ENCODE measurements at regions of chr3 and their contacts with region 1.

Region 1: GRCh38 chr3:42129014-42129953 is 38.1 kb downstream of the TRAK1 start:
- DNase-seq: peak; percentile 53 to 63
- H3K4me3 ChIP-seq: no peak overlapping the region
- H3K4me3 Mint-ChIP-seq: peak overlapping the region; percentile 48
- H3K27ac Mint-ChIP-seq: peak overlapping the region; percentile 91
- H3K4me1 ChIP-seq: peaks cover 46% of the 10 kb centered on the region
- H3K4me1 Mint-ChIP-seq: peaks cover 33% of the 10 kb centered on the region
- H3K27me3 ChIP-seq: no peaks in the 10 kb centered on the region
- H3K27me3 Mint-ChIP-seq: no peaks in the 10 kb centered on the region
- CTCF ChIP-seq: no peak

Region 2: GRCh38 chr3:42149532-42150426 is 20.5 kb after region 1 on chr3:
- CTCF ChIA-PET with region 1: interaction called, 4 read pairs
- POLR2A ChIA-PET with region 1: interaction called, 4 read pairs
- intact Hi-C with region 1: loop called (anchors 1 kb)
- DNase-seq: peak; percentile 88 to 97
- H3K4me3 ChIP-seq: no peak overlapping the region
- H3K4me3 Mint-ChIP-seq: peak overlapping the region; percentile 51
- H3K27ac Mint-ChIP-seq: peak overlapping the region; percentile 89
- H3K4me1 ChIP-seq: peaks cover 46% of the 10 kb centered on the region
- H3K4me1 Mint-ChIP-seq: peaks cover 18% of the 10 kb centered on the region
- H3K27me3 ChIP-seq: no peaks in the 10 kb centered on the region
- H3K27me3 Mint-ChIP-seq: no peaks in the 10 kb centered on the region
- CTCF ChIP-seq: no peak

Region 3: GRCh38 chr3:42159706-42160472 is 30.6 kb after region 1 on chr3:
- CTCF ChIA-PET with region 1: interaction called, 10 read pairs
- POLR2A ChIA-PET with region 1: interaction called, 8 read pairs
- intact Hi-C with region 1: loop called (anchors 2 kb)
- DNase-seq: peak; percentile 87 to 94
- H3K4me3 ChIP-seq: peak overlapping the region; percentile 42
- H3K4me3 Mint-ChIP-seq: peak overlapping the region; percentile 80
- H3K27ac Mint-ChIP-seq: peak overlapping the region; percentile 75
- H3K4me1 ChIP-seq: peaks cover 24% of the 10 kb centered on the region
- H3K4me1 Mint-ChIP-seq: peaks cover 17% of the 10 kb centered on the region
- H3K27me3 ChIP-seq: no peaks in the 10 kb centered on the region
- H3K27me3 Mint-ChIP-seq: no peaks in the 10 kb centered on the region
- CTCF ChIP-seq: no peak

Region 4: GRCh38 chr3:42179110-42179725 is 49.9 kb after region 1 on chr3:
- CTCF ChIA-PET with region 1: interaction called, 3 read pairs
- POLR2A ChIA-PET with region 1: no interaction called
- intact Hi-C with region 1: loop called (anchors 1 kb)
- DNase-seq: peak; percentile 69
- H3K4me3 ChIP-seq: no peak overlapping the region
- H3K4me3 Mint-ChIP-seq: peak overlapping the region; percentile 67
- H3K27ac Mint-ChIP-seq: peak overlapping the region; percentile 96
- H3K4me1 ChIP-seq: peaks cover 30% of the 10 kb centered on the region
- H3K4me1 Mint-ChIP-seq: peaks cover 17% of the 10 kb centered on the region
- H3K27me3 ChIP-seq: no peaks in the 10 kb centered on the region
- H3K27me3 Mint-ChIP-seq: no peaks in the 10 kb centered on the region
- CTCF ChIP-seq: no peak